OCI-LY7 (cell line): ENCODE measurements at regions of chr10 and their contacts with region 1.

Region 1: GRCh38 chr10:72625608-72626443 is at the start of gene MICU1:
- DNase-seq: peak; percentile 96
- H3K4me3 ChIP-seq: peak within 1 kb of the TSS; percentile 97
- H3K27ac ChIP-seq: peak within 1 kb of the TSS; percentile 44
- H3K4me1 ChIP-seq: peaks cover 14% of the 10 kb centered on the region
- CTCF ChIP-seq: no peak
- total RNA-seq, gene MICU1: 27.0 and 27.2 TPM in 2 replicates

Region 2: DNA sequence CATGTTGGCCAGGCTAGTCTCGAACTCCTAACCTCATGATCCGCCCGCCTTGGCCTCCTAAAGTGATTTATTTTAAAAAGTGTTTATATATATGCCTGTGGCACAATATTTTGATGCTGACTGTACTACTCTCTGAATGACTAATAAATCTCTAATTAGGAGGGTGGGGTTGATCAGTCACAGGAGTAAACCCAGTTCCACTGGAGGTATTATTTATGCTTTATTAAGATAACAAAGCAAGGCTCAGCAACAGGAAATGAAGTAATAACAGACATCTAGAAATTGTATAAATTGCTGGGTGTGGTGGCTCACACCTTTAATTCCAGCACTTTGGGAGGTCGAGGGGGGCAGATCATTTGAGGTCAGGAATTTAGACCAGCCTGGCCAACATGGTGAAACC is 40.1 kb after region 1 on chr10:
- CTCF ChIA-PET with region 1: no interaction called
- POLR2A ChIA-PET with region 1: interaction called, 10 read pairs
- intact Hi-C with region 1: no loop called
- DNase-seq: no peak
- H3K4me3 ChIP-seq: no peak overlapping the region
- H3K27ac ChIP-seq: no peak overlapping the region
- H3K4me1 ChIP-seq: no peaks in the 10 kb centered on the region
- CTCF ChIP-seq: no peak

Region 3: DNA sequence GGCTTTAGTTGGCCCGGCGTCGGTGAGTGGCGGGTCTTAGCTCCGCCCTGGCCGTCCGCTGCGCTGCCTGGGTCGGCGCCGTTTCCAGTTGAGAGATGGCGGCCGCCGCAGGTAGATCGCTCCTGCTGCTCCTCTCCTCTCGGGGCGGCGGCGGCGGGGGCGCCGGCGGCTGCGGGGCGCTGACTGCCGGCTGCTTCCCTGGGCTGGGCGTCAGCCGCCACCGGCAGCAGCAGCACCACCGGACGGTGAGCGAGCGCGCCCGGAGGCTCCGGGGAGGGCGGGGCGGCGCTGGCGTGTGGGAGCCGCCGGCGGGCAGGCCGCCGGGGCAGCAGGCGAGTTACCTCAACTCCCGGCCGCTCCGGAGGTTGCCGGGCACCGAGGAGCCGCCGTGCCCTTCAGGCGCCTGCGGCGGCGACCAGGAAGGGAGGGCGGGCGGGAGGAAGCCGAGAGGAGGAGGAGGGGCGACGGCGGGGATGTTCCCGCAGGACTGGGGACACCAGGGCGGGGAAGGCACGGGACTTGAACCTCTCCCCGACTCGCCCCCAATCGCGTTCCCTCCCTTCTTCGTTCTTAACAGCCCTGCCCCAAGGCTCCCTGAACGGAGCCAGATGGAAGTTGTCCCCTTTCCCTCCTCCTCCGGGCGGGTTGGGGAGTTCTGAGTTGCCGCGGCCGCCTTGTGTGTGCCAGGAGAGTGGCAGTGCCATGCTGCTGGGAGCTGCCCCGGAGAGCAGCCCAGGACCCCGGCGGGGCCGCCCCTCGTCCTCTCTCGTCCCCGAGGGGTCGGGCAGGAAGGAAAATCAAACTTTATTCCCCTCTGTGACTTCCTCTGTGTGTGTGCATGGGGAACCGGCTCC is 66.5 kb after region 1 on chr10 and contains the start of gene MCU:
- CTCF ChIA-PET with region 1: no interaction called
- POLR2A ChIA-PET with region 1: interaction called, 6 read pairs
- intact Hi-C with region 1: loop called (anchors 1 kb)
- DNase-seq: peak; percentile 95
- H3K4me3 ChIP-seq: peak within 1 kb of the TSS; percentile 97
- H3K27ac ChIP-seq: peak within 1 kb of the TSS; percentile 37
- H3K4me1 ChIP-seq: peaks cover 31% of the 10 kb centered on the region
- CTCF ChIP-seq: no peak
- total RNA-seq, gene MCU: 7.7 and 9.9 TPM in 2 replicates